A673 (cell line): ENCODE measurements at regions of chr5 and their contacts with region 1.

Region 1: DNA sequence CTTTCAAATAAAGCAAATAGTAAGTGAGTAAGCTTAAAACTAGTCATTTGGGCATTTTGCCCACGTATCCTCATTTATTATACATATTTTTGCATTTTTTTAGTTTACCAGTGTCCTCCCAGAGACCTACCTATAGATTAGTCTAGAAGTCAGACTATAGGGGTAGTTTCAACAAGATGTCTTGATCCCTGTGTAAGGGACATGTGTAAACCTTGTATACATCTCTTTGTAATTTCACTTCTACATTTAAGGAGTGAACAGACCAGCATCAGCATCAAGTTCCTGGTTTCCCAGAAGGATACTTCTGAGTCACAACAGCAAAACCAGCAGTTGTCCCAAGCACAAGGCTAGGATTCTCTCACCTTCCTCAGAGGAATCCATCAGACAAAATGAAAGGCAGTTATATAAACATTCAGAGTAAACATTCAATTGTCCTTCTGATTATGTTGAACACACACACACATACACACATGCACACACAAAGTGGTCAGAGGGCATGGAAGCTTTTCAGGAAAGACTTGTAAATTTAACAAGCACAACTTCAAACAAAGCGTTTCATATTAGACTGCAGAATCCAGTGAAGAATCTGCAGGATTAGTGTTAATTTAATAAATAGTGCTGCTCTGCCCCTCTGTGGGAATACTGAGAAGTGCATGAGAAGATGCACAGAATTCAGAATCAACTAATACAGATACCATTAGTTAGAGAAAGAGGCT is 55.4 kb downstream of the HINT1 start:
- DNase-seq: peak; percentile 65
- H3K4me3 ChIP-seq: no peak overlapping the region
- H3K27ac ChIP-seq: no peak overlapping the region
- H3K4me1 ChIP-seq: no peaks in the 10 kb centered on the region
- H3K27me3 ChIP-seq: peaks cover 5% of the 10 kb centered on the region
- CTCF ChIP-seq: peak; percentile 80

Region 2: GRCh38 chr5:129904102-129904666 is 1205.5 kb before region 1 on chr5 and contains the start of gene CHSY3:
- CTCF ChIA-PET with region 1: no interaction called
- POLR2A ChIA-PET with region 1: no interaction called
- intact Hi-C with region 1: loop called (anchors 10 kb)
- DNase-seq: peak; percentile 77
- H3K4me3 ChIP-seq: peak within 1 kb of the TSS; percentile 36
- H3K27ac ChIP-seq: no peak within 1 kb of the TSS
- H3K4me1 ChIP-seq: peaks cover 11% of the 10 kb centered on the region
- H3K27me3 ChIP-seq: peaks cover 82% of the 10 kb centered on the region
- CTCF ChIP-seq: no peak
- total RNA-seq, gene CHSY3: not detected in 2 replicates

Region 3: GRCh38 chr5:130109152-130109551 is 1000.5 kb before region 1 on chr5:
- CTCF ChIA-PET with region 1: no interaction called
- POLR2A ChIA-PET with region 1: no interaction called
- intact Hi-C with region 1: loop called (anchors 5 kb)
- DNase-seq: peak; percentile 40
- H3K4me3 ChIP-seq: no peak overlapping the region
- H3K27ac ChIP-seq: no peak overlapping the region
- H3K4me1 ChIP-seq: no peaks in the 10 kb centered on the region
- H3K27me3 ChIP-seq: peaks cover 25% of the 10 kb centered on the region
- CTCF ChIP-seq: peak; percentile 66

Region 4: DNA sequence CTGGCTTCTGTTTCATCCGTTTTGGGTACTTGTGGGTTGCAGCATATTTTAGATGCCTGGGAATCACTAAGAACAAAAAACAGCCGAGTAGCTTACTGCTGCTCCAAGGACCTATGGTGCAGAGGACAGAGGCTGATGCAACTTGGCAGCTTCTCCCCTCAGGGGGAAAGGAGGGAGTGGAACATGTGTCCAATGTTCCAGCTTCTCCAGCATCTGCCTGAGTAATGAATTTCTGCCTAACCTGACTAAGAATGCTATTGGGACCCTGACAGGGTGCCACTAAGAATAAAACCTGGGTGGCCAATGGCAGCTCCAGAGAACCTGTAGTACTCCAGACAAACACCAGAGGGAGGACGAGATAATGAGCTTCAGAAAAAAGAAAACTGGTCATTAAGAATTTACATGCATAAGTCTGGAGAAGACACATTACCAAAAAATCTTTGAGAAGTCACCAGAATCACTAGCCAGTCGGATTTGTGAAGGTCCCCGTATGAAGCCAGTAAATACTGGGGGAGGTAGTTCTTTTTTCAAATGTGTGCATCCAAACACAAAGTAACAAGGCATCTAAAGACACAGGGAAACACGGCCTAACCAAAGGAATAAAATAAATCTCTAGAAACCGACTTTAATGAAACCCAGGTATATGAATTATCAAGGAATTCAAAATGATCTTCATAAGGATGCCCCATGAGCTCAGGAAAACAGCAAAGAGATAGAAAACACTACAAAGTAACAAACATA is 238.2 kb before region 1 on chr5:
- CTCF ChIA-PET with region 1: interaction called, 4 read pairs
- POLR2A ChIA-PET with region 1: no interaction called
- intact Hi-C with region 1: loop called (anchors 2 kb)
- DNase-seq: peak; percentile 59
- H3K4me3 ChIP-seq: no peak overlapping the region
- H3K27ac ChIP-seq: no peak overlapping the region
- H3K4me1 ChIP-seq: no peaks in the 10 kb centered on the region
- H3K27me3 ChIP-seq: peaks cover 4% of the 10 kb centered on the region
- CTCF ChIP-seq: peak; percentile 68

Region 5: GRCh38 chr5:131242728-131243255 is 133.1 kb after region 1 on chr5:
- CTCF ChIA-PET with region 1: no interaction called
- POLR2A ChIA-PET with region 1: no interaction called
- intact Hi-C with region 1: no loop called
- DNase-seq: peak; percentile 29
- H3K4me3 ChIP-seq: no peak overlapping the region
- H3K27ac ChIP-seq: no peak overlapping the region
- H3K4me1 ChIP-seq: no peaks in the 10 kb centered on the region
- H3K27me3 ChIP-seq: no peaks in the 10 kb centered on the region
- CTCF ChIP-seq: no peak

Region 6: DNA sequence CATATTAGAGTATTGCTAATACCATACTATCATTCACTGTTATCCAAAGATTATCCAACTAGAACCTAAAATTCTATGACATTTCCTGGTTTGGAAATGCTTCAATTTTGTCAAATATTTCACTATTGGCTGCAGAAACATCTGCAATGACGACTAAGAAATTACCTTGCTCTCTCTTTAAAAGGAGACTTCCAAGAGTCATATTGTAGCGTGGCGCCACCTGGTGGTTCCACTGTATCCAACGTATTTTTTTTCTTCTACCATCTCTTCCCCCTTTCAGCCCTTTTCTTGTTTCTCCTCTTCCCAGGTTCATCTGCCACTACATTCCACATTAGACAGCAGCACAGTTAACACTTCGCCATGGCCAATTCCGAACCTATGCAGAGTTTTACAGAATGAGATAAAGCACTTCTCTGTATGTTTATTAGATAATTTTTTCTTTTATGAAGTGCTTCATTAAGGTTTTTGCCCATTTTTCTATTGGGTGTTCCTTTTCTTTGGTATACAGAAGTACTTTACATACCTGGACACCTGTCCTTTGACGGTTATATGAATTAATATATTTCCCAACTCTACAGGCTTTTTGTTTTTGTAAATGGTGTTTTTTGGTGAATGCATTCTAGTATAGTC is 307.7 kb after region 1 on chr5:
- CTCF ChIA-PET with region 1: no interaction called
- POLR2A ChIA-PET with region 1: no interaction called
- intact Hi-C with region 1: loop called (anchors 5 kb)
- DNase-seq: peak; percentile 80
- H3K4me3 ChIP-seq: no peak overlapping the region
- H3K27ac ChIP-seq: no peak overlapping the region
- H3K4me1 ChIP-seq: no peaks in the 10 kb centered on the region
- H3K27me3 ChIP-seq: no peaks in the 10 kb centered on the region
- CTCF ChIP-seq: peak; percentile 90